Upper lobe of right lung (tissue), 1 donor: ENCODE measurements at regions of chr5 and their contacts with region 1.

Region 1: DNA sequence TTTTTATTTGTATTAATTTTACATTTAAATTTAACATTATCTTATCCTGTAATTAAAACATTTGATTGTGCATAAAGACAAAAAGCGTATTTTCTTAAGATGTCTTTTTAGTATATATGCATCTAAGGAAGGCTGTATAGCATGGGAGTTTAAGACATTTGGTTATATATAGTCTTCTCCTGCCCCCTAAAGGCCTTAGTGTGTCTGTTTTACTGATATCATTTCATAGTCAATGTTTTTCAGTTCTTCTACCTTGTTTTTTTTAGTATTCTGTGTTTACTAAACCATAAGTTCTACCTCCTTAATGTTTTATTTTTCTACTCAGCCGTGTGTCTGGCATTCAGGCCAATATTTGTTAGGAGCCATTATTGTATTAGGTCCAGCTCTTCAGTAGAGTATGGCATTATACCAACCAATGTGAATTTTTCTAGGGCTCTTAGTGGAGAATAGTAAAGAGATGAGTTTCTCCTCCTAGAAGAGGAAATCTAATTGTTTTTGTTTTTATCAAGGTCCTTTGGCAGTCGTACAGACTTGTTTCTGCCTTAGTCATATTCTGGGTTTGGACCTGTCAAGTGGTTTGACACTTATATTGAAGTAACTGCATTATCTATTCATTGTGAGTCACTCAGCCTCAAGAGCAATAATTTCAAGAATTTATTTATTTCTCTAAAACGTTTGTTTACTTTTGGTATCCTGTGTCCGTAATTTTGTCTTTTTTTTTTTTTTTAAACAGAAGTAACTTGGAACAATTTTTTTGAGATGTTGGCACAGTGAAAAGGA is 74.8 kb downstream of the SLF1 start:
- DNase-seq: no peak
- ATAC-seq: no peak
- H3K4me3 ChIP-seq: no peak overlapping the region
- H3K27ac ChIP-seq: no peak overlapping the region
- H3K4me1 ChIP-seq: peaks cover 3% of the 10 kb centered on the region
- H3K27me3 ChIP-seq: no peaks in the 10 kb centered on the region
- CTCF ChIP-seq: peak; percentile 40

Region 2: GRCh38 chr5:93954421-93955069 is 738.7 kb before region 1 on chr5:
- intact Hi-C with region 1: loop called (anchors 10 kb)
- DNase-seq: no peak
- ATAC-seq: no peak
- H3K4me3 ChIP-seq: no peak overlapping the region
- H3K27ac ChIP-seq: no peak overlapping the region
- H3K4me1 ChIP-seq: no peaks in the 10 kb centered on the region
- H3K27me3 ChIP-seq: no peaks in the 10 kb centered on the region
- CTCF ChIP-seq: no peak

Region 3: GRCh38 chr5:94745786-94746730 is 52.8 kb after region 1 on chr5:
- intact Hi-C with region 1: no loop called
- DNase-seq: no peak
- ATAC-seq: no peak
- H3K4me3 ChIP-seq: no peak overlapping the region
- H3K27ac ChIP-seq: no peak overlapping the region
- H3K4me1 ChIP-seq: no peaks in the 10 kb centered on the region
- H3K27me3 ChIP-seq: no peaks in the 10 kb centered on the region
- CTCF ChIP-seq: no peak

Region 4: DNA sequence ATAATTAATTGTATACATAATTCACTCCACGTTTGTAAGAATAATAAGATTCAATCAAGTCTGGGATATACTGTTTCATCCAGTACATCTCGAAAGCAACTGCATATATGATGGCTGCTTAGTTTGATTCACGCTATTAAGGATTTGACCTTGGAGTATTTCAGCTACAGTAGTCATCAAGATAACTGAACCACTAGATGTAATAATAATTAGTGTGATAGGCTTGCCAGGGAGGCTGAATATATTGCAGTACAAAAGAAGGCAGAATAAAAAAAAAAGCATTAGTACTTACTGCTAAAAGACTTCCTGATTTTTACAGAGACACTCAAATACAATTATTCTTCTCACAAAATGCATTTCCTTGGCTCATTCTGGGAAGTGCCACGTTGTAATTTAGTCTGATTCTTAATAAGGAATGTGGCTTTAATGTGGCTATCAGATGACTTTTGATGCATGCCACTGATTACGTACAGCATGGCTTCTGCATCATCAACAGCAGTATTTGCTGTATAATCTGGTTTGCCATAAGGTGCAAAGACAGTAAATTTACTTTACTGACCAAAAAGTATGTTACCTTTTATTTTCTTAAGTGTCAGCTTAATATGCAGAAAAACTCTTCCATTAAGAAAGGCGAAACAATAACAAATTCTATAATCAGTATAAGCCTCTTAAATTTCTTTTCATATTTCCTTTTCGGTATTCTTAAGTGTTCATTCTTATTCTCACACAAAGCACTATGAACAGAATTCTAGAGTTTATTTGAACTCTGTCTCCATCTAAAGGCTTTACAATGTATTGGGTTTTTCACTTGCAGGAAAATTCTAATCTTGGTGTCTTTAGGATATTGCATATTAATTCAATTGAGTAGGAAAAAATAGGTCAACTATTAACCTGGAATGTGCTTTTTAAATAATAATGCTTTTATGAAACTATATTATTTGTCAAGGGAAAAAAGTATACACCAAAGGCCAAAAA is 91.6 kb after region 1 on chr5:
- intact Hi-C with region 1: no loop called
- DNase-seq: no peak
- ATAC-seq: no peak
- H3K4me3 ChIP-seq: no peak overlapping the region
- H3K27ac ChIP-seq: no peak overlapping the region
- H3K4me1 ChIP-seq: no peaks in the 10 kb centered on the region
- H3K27me3 ChIP-seq: no peaks in the 10 kb centered on the region
- CTCF ChIP-seq: peak; percentile 8